ENCODE measurements at regions of chr4 and their contacts with region 1.

Region 1: DNA sequence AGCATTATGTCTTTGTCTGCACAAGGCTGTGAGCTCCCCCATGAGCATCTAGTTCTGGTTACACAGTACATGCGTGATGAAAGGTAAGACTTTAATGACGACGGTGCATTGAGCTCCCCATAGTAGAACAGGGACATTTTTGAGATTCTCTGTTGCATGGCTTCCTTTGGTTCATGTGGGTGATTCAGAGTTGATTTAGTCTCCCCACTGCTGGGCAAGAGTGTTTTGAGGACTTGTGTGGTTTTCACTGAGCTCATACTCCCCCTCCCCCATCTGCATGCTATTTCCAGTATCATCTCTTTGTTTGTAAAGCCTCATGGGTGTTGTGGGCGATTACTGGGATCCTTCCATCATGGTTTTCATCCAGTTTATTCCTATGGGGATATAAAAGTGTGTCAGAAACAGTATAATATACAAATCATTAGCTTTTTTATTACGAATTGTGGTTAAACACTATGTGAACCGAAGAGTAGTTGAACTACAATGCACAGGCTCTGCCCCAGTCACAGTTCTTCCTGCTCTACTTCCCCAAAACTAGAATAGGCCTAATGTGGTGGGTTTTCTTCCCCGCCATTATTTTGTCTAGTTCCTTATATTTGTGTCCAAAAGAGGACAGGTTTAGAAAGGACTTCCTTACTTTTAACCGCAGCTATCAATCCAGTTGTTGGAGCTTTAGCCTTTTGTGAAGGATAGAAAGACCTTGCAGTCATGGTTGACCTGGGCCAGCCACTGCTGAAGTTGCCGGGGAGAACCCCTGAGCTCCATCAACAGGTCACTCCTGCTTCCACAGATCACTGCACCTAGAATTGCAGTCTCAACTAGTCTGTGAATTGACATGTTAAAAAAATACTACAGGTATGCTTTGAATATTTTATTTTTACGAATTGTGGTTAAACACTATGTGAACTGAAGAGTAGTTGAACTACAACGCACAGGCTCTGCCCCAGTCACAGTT is 30.4 kb downstream of the KIT start:
- DNase-seq: no peak

Region 2: DNA sequence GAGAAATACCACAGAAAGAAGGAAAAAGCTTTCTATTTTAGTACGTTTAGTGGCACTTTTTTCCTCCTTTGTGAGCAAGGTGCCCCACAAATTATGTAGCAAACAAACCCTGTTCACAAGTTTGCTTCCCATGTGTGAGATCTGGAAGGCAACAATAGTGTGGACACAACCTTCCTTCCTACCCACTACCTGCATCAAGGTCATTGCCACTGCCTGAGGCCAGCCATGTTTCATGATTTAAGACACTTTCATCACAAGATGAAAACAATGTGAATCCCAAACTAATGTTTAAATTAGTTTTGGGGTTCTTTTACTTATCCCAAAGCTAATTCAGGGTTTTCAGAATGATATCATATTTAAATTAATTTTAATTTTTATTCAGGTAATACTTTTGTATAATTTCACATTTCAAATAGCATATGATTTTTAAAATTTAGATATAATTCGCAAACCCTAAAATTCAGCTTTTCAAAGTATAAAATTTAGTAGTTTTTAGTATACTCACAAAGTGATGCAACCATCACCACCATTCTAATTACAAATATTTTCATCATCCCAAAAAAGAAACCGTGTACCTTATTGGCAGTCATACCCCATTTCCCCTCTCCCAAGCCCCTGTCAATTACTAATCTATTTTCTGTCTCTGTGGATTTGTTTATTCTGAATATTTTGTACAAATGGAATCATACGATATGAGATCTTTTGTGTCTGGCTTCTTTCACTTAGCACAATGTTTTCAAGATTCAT is 67.6 kb before region 1 on chr4:
- intact Hi-C with region 1: loop called in 1 of 2 experiments (anchors 1 kb)
- DNase-seq: no peak

Region 3: DNA sequence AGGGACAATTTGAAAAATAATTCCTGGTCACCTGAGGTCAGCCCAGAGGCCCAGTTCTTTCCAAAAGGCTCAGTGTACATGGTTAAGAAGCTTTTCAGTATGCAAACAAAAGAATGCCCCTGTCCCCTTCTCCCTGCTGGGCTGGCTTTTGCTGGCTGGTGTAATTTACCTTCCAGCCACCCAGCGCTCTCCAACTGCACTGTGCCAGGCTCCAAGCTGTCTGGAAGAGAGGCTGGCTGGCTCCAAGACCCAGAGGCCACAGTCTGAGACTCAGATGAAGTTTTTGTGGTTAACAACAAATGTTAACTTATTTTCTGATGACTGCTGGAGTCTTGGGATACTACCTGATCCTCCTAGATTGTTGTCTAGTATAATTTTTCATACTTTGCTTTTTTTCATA is 42.3 kb before region 1 on chr4:
- intact Hi-C with region 1: no loop called
- DNase-seq: no peak

Region 4: DNA sequence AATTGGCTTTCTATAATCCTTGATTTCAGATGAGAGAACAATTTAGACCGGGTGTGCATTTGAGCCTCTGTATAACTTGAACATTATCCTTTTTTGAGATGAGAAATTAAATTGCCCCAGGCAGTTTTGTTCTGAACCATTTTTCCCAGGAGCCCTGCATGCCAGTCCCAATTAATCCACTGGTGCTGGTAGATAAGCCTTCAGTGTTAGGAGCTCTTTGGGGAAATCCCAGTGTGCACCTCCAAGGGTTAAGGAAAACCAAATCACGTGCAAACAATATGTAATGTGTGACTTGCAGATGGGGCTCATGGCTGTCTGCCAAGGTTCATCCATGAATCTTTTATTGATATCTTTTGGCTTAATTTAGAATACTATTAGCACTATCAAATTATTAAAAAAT is 12.8 kb after region 1 on chr4:
- intact Hi-C with region 1: no loop called
- DNase-seq: no peak

Region 5: GRCh38 chr4:54754394-54754793 is 66.2 kb after region 1 on chr4:
- intact Hi-C with region 1: no loop called
- DNase-seq: no peak

Region 6: DNA sequence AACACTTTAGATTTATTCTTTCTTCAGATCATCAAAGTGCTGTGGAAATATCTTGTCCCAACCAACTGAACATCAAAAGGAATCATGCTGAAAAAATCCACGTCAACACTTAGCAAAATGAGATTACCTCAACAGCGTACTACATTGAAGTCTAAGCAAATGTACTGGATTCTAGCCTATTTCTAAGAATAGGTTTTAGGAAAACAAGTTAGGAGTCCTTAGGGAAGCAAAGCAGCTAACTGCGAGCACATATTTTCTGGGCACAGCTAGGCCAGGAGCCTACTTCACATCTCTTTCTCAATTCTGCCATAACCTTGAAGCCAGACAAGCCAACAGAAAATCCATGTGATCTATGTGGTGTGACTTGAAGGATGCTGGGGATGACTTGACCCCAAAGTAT is 415.1 kb after region 1 on chr4:
- intact Hi-C with region 1: no loop called
- DNase-seq: no peak

Measured in posterior vena cava (tissue), 2 donors.